ENCODE measurements at regions of chr2 and their contacts with region 1.

Region 1: GRCh38 chr2:181573140-181573736 is 83.7 kb downstream of the CERKL start:
- DNase-seq: no peak

Region 2: DNA sequence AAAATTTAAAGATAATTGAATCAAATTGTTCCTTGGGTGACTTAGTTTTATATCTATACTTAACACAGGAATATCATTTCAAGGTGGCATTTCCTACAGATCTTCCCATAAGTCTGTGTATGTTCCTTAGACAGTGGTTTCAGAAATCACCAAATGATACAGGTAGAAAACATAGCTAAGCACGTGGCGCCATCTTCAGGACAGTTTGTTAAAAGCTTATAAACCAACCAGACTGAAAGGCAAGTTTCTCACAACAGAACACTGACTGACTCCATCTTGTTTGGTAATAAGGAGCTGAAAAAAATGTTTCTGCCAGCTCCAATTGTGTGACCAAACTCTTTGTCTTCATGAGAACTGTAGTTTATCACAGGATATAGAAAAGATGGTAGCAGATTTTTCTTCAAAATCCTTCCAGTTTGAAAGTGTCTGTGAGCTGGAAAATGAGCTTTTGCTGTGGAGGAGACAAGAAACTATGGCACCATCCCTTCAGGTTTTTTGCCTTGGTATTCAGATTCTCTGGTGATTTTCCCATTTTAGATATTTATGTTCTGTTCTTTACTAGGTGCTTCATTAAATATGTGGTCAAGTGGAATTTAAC is 141.9 kb after region 1 on chr2:
- CTCF ChIA-PET with region 1: interaction called, 34 read pairs
- POLR2A ChIA-PET with region 1: no interaction called
- DNase-seq: peak; percentile 66